Activated T-helper 1 cell treated with anti-CD3 and anti-CD28 coated beads, Interleukin-12 subunit alpha, Interleukin-12 subunit beta, Interleukin-2, Interleukin-4 antibody, amounts not matched to agents 30 ng/mL and 10 ng/mL and 1 ng/mL, durations not matched to agents 14 hours and 24 hours and 36 hours (primary cell): ENCODE measurements at regions of chr17 and their contacts with region 1.

Region 1: DNA sequence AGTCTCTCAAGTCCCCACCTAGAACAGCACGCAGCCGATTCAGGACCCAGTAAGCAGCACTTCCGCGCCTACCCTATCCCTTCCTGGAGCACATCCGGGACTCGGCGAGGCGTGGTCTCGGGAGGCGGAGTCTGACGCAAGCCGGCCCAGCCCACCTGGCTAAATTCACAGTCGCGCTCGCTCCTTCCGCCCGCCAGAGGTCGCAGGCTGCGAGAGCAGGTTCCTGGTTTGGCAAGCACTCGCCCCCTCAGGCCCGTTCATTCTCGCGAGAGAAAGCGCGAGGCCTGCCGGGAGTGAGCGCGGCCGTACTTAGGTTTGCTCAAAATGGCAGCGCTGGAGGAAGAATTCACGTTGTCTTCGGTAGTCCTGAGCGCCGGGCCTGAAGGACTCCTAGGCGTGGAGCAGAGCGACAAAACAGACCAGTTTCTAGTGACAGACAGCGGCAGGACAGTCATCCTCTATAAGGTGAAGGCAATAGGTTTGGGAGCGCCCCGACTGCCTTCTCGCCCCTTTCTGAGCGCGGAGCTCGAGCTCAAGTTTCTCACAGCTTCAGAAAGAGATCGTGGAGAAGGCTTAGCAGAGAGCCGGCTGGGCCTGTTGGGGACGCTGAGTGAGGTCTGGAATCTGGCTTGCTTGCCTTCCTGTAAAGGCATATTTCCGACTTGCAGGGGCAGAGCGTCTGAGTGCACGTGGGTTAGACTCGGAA is at the start of gene NOL11:
- DNase-seq: peak; percentile 99
- H3K4me3 Mint-ChIP-seq: peak within 1 kb of the TSS; percentile 99
- H3K27ac Mint-ChIP-seq: peak within 1 kb of the TSS; percentile 99
- H3K4me1 Mint-ChIP-seq: peaks cover 16% of the 10 kb centered on the region
- H3K27me3 Mint-ChIP-seq: peaks cover 4% of the 10 kb centered on the region
- total RNA-seq, gene NOL11: 107 and 118 TPM in 2 replicates

Region 2: DNA sequence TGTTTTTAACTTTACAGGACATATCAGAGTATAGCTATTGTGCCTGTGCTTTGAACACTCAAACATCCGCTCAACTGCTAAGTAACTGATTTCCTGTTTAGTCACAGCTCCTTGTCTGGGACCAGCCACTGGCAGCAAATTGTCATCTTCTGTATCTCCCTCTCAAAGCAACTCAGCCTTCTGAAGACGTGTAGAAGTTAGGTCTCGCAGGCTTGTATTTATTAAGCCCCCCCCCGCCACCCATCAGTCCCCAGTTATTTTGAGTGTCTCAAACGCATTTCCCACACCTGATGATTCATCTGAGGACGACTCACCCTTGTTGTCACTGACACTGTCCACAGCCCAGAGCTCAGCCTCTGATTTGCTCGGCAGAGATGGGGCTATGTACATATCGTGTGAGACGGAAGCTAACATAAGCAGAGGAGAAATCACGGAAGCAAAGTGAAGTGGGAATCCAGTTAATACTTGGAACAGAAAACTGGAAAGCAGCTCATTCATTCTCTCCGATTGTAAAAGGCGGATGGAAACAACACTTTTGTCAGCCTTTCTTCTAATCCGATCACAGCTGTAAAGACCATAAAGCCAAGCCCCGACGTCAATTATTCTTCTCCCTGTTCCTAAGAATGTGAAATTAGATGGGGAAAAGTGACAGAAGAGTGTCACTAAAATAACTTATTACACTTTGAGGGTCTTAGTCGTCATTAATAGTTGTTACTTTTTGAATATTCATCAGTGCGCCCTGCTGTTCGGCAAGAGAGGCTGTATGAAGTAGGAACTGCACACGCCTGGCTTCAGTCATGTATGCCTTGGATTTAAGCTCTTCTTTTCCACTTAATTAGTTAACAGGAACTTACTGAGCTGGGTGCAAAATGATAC is 276.5 kb before region 1 on chr17:
- intact Hi-C with region 1: loop called (anchors 1 kb)
- DNase-seq: peak; percentile 65
- H3K4me3 Mint-ChIP-seq: peak overlapping the region; percentile 82
- H3K27ac Mint-ChIP-seq: peak overlapping the region; percentile 98
- H3K4me1 Mint-ChIP-seq: peaks cover 51% of the 10 kb centered on the region
- H3K27me3 Mint-ChIP-seq: no peaks in the 10 kb centered on the region

Region 3: GRCh38 chr17:67689534-67690177 is 28.1 kb before region 1 on chr17:
- intact Hi-C with region 1: no loop called
- DNase-seq: peak; percentile 31
- H3K4me3 Mint-ChIP-seq: no peak overlapping the region
- H3K27ac Mint-ChIP-seq: no peak overlapping the region
- H3K4me1 Mint-ChIP-seq: no peaks in the 10 kb centered on the region
- H3K27me3 Mint-ChIP-seq: no peaks in the 10 kb centered on the region